Activated naive CD4-positive, alpha-beta T cell treated with anti-CD3 and anti-CD28 coated beads, Interleukin-2, amount 10 ng/mL, durations not matched to agents 7 days and 5 days (primary cell): ENCODE measurements at regions of chr2 and their contacts with region 1.

Region 1: GRCh38 chr2:113700186-113700841 is 56.1 kb downstream of the SLC35F5 start:
- DNase-seq: peak; percentile 66
- H3K4me3 Mint-ChIP-seq: peak overlapping the region; percentile 8
- H3K27ac Mint-ChIP-seq: no peak overlapping the region
- H3K4me1 Mint-ChIP-seq: peaks cover 21% of the 10 kb centered on the region
- H3K27me3 Mint-ChIP-seq: no peaks in the 10 kb centered on the region

Region 2: DNA sequence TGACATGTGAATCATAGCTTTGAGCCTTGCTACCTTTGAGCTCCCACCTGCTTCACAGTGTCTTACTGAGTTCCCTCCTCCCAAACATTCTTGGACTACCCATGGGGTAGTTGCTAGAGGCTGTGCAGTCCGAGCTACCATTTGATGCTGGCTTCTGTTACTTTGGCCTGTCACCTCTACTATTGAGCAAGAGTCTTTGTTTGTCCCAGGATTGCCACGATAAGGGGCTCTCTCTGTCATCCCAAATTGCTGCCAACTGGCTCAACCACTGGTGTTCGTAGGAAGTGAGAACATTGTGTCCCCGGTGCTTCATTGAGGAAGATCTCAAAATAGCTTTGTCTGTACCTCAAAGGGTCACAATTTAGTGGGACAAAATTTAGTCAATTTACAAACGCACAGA is 362.5 kb before region 1 on chr2:
- CTCF ChIA-PET with region 1: no interaction called
- DNase-seq: no peak
- H3K4me3 Mint-ChIP-seq: no peak overlapping the region
- H3K27ac Mint-ChIP-seq: no peak overlapping the region
- H3K4me1 Mint-ChIP-seq: peaks cover 3% of the 10 kb centered on the region
- H3K27me3 Mint-ChIP-seq: peaks cover 38% of the 10 kb centered on the region

Region 3: GRCh38 chr2:113602869-113603466 is 97.3 kb before region 1 on chr2:
- CTCF ChIA-PET with region 1: interaction called, 27 read pairs
- DNase-seq: no peak
- H3K4me3 Mint-ChIP-seq: peak overlapping the region; percentile 95
- H3K27ac Mint-ChIP-seq: peak overlapping the region; percentile 98
- H3K4me1 Mint-ChIP-seq: peaks cover 10% of the 10 kb centered on the region
- H3K27me3 Mint-ChIP-seq: peaks cover 5% of the 10 kb centered on the region